ENCODE measurements at regions of chr2 and their contacts with region 1.

Region 1: DNA sequence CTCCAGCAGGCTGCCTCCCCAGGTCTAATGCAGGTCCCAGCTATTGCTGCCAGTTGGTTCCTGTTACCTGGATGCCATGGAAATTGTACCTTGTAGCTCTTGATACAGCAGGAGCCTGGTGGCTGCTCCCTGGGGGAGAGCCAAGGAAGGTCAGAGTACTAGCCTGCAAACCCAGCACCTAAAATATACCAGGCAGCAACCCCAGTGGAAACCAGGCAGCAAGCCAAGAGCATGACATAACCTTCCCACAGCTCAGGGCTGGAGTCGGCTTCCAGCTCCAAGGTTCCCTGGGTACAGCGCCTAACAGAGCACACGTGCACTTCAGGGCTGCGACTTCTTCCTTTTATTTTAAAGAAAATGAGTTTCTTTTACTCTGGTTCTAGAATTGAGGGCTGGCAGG is 30.3 kb downstream of the TNP1 start:
- DNase-seq: peak; percentile 96
- H3K4me3 ChIP-seq: no peak overlapping the region
- H3K27ac ChIP-seq: peak overlapping the region in 3 of 4 donors; percentile 45 to 76 (median 75)
- H3K4me1 ChIP-seq: peaks cover 0 to 42% (median 38%) of the 10 kb centered on the region in 4 donors
- H3K27me3 ChIP-seq: no peaks in the 10 kb centered on the region
- CTCF ChIP-seq: no peak
- EP300 ChIP-seq: peak in 2 of 4 donors; percentile 4 to 27
- POLR2A ChIP-seq: no peak

Region 2: GRCh38 chr2:216596236-216596979 is 233.1 kb before region 1 on chr2:
- intact Hi-C with region 1: no loop called
- DNase-seq: no peak
- H3K4me3 ChIP-seq: no peak overlapping the region
- H3K27ac ChIP-seq: no peak overlapping the region
- H3K4me1 ChIP-seq: peaks cover 0 to 8% (median 4%) of the 10 kb centered on the region in 4 donors
- H3K27me3 ChIP-seq: no peaks in the 10 kb centered on the region
- CTCF ChIP-seq: no peak
- EP300 ChIP-seq: no peak
- POLR2A ChIP-seq: no peak

Region 3: GRCh38 chr2:216666461-216667233 is 162.9 kb before region 1 on chr2:
- intact Hi-C with region 1: no loop called
- DNase-seq: no peak
- H3K4me3 ChIP-seq: no peak overlapping the region
- H3K27ac ChIP-seq: peak overlapping the region in 1 of 4 donors; percentile 66
- H3K4me1 ChIP-seq: peaks cover 0 to 17% (median 15%) of the 10 kb centered on the region in 4 donors
- H3K27me3 ChIP-seq: no peaks in the 10 kb centered on the region
- CTCF ChIP-seq: peak; percentile 94 to 99 (median 98)
- EP300 ChIP-seq: no peak
- POLR2A ChIP-seq: no peak

Region 4: DNA sequence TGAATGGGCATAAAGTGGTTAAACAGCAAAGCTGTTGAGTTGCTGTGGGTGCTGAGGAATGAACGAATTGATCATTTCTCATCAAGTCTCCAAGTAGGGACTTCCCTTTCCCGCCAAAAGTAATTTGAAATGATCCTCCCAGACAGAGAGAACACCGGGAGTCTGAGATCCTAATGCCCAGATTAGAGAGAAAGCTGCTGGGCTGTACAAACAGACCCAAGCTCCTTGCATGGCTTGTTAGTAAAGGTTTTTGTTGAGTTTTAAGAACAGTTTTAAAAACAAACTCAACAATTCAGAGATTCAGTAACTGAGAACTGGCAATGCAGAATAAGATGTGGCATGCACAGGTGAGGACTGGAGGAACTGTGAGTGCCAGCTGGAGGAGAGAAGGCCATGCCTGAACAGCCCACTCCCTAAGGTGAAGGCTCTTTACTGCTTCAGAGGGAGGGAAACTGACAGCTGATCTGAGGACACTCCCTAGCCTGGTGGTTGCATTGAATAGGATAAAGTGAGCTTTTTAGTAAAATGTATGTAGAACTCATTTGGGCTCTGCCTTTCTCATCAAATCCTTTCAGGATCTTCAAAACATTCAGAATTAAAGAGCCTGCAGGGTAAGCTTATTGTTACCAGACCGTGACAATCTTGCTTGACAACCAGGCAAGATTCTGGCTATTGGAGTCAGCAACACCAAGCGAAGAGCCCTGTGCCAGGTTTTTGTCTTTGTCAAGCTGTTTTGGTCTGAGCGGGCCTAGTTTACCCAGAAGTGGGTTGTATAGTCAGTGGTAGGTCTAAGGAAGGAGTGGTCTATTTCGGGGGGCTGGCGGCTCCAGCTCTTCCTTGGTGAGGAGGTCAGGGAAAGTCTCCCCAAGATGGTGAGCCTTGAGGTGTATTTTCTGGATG is 71.0 kb before region 1 on chr2:
- intact Hi-C with region 1: loop called (anchors 1 kb)
- DNase-seq: no peak
- H3K4me3 ChIP-seq: no peak overlapping the region
- H3K27ac ChIP-seq: peak overlapping the region in 3 of 4 donors; percentile 73 to 82 (median 73)
- H3K4me1 ChIP-seq: peaks cover 0 to 89% (median 82%) of the 10 kb centered on the region in 4 donors
- H3K27me3 ChIP-seq: no peaks in the 10 kb centered on the region
- CTCF ChIP-seq: no peak
- EP300 ChIP-seq: no peak
- POLR2A ChIP-seq: no peak

Region 5: DNA sequence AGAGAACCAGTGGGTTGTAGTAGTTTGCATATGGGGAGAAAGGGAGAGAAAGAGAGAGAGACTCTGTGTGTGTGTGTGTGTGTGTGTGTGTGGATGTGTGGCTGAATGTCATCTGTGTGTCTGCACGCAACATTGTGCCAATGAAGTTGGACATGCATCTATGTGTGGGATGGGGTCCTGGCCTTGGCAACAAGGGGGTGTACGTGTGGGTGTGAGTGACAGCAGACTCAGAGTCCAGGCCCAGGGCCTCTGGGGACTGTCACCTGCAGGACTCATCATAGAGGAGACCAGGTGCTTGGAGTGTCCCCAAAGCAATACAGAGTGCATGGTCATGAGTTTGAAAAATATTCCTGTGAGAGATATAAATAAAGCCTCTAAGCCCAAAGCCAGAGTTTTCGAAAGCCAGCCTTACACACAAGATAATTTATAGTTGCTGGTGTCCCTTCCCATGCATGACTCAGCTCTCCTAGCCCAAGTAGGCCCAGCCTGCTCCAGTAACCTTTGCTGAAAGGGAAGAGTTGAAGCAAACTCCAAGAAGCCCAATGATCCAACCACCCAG is 29.6 kb before region 1 on chr2:
- intact Hi-C with region 1: loop called (anchors 2 kb)
- DNase-seq: peak; percentile 91
- H3K4me3 ChIP-seq: no peak overlapping the region
- H3K27ac ChIP-seq: peak overlapping the region; percentile 34 to 82 (median 77)
- H3K4me1 ChIP-seq: peaks cover 0 to 46% (median 22%) of the 10 kb centered on the region in 4 donors
- H3K27me3 ChIP-seq: no peaks in the 10 kb centered on the region
- CTCF ChIP-seq: no peak
- EP300 ChIP-seq: peak in 2 of 4 donors; percentile 48 to 59
- POLR2A ChIP-seq: no peak